ENCODE measurements at regions of chr17 and their contacts with region 1.

Region 1: GRCh38 chr17:45640141-45640850 is 143.8 kb upstream of the CRHR1 start:
- DNase-seq: peak; percentile 81
- ATAC-seq: peak; percentile 81
- H3K4me3 Mint-ChIP-seq: no peak overlapping the region
- H3K27ac Mint-ChIP-seq: no peak overlapping the region
- H3K4me1 Mint-ChIP-seq: peaks cover 17% of the 10 kb centered on the region
- H3K27me3 Mint-ChIP-seq: no peaks in the 10 kb centered on the region

Region 2: GRCh38 chr17:45573924-45574770 is 66.1 kb before region 1 on chr17:
- CTCF ChIA-PET with region 1: no interaction called
- DNase-seq: no peak
- ATAC-seq: no peak
- H3K4me3 Mint-ChIP-seq: no peak overlapping the region
- H3K27ac Mint-ChIP-seq: no peak overlapping the region
- H3K4me1 Mint-ChIP-seq: peaks cover 17% of the 10 kb centered on the region
- H3K27me3 Mint-ChIP-seq: no peaks in the 10 kb centered on the region

Region 3: DNA sequence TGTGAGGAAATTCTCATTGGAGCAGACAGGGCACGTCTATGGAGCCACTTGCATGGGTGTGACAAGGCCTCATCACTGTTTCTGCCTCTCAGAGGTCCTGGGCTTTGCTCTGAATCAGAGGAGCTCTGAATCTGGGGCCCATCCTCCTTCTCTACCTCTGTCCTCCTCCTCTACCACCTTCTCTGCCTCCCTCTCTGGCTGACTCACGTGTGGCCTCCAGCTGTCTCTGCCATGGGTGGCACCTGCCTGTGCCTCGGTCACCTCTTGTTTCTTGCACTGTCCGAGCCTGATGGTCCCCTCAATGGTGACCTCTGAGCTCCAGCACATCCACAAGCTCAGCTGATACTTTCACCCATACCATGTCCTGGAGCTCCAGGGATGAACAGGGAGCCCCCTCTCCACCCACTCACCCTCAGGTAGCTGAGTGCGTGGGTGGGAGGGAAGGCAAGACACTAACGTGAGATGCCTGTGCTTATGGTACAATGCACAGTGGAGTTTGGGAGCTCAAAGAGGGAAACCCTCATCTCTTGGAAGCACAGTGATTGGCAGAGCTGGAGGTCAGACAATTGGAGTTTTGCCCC is 27.4 kb after region 1 on chr17:
- CTCF ChIA-PET with region 1: interaction called, 10 read pairs
- DNase-seq: no peak
- ATAC-seq: no peak
- H3K4me3 Mint-ChIP-seq: no peak overlapping the region
- H3K27ac Mint-ChIP-seq: no peak overlapping the region
- H3K4me1 Mint-ChIP-seq: no peaks in the 10 kb centered on the region
- H3K27me3 Mint-ChIP-seq: peaks cover 9% of the 10 kb centered on the region

Region 4: GRCh38 chr17:45834471-45835396 is 194.4 kb after region 1 on chr17:
- CTCF ChIA-PET with region 1: interaction called, 76 read pairs
- DNase-seq: no peak
- ATAC-seq: no peak
- H3K4me3 Mint-ChIP-seq: no peak overlapping the region
- H3K27ac Mint-ChIP-seq: no peak overlapping the region
- H3K4me1 Mint-ChIP-seq: no peaks in the 10 kb centered on the region
- H3K27me3 Mint-ChIP-seq: no peaks in the 10 kb centered on the region

Region 5: DNA sequence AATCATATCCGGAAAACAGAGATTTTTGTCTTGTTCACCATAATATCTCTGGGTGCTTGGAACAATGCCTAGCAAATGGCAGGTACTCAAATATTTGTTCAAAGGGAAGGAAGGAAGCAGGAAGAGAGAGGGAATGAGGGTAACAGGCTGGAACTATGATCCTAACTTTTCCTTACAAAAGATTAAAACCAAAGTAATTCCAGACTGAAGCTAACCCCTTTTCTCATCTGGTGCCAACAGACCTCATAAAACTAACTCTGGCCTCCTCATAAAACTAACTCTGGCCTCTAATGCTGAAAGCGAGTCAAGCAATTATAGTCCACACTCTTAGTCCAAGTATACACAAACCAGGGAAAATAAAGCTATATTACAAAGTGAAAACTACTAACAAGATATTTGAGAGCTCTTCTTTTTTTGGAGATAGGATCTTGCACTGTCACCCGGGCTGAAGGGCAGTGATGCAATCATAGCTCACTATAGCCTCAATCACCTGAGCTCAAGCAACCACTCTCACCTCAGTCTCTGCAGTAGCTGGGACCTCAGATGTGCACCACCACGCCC is 468.3 kb after region 1 on chr17:
- CTCF ChIA-PET with region 1: no interaction called
- DNase-seq: no peak
- ATAC-seq: no peak
- H3K4me3 Mint-ChIP-seq: no peak overlapping the region
- H3K27ac Mint-ChIP-seq: no peak overlapping the region
- H3K4me1 Mint-ChIP-seq: peaks cover 21% of the 10 kb centered on the region
- H3K27me3 Mint-ChIP-seq: no peaks in the 10 kb centered on the region